Panc1 (cell line): ENCODE measurements at regions of chr10 and their contacts with region 1.

Region 1: GRCh38 chr10:79202188-79203013 is 133.6 kb downstream of the ZMIZ1 start:
- DNase-seq: no peak
- ATAC-seq: peak; percentile 79
- H3K4me3 ChIP-seq: no peak overlapping the region
- H3K27ac ChIP-seq: no peak overlapping the region
- H3K4me1 ChIP-seq: no peaks in the 10 kb centered on the region
- H3K27me3 ChIP-seq: no peaks in the 10 kb centered on the region
- CTCF ChIP-seq: peak; percentile 89; the same call in 1 of the 2 replicates

Region 2: DNA sequence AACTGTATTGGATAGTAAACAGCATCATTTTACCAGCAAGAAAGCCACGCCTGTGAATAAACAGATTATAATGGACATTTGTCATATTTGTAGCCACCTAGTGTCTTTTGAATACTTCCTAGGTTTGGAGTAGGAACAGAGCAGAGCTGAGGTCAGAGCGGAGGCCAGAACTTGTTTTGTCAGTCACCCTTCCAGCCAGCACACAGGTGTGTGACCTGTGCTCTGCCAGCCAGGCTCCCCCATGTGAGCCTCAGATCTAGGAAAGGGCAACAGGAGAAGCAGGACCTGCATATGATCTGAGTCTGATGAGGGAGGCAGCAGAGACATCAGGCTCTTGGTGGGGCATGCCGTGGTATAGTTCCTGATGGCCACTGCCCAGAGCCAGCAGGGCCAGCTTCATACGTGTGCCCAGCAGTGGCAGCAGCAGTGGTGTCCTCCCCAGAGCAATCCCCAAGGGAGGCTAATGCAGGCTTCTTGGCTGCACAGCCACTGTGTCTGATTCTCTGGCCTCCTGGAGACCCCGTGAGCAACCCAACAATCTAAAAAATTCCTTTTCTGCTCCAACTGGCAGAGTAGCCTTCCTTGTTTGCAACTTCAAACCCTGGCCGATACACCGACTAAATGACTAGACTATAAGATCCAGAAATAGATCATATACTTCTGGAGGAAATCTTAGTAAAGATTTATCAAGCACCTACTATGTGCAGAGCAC is 364.3 kb before region 1 on chr10:
- CTCF ChIA-PET with region 1: no interaction called
- POLR2A ChIA-PET with region 1: interaction called, 13 read pairs
- in situ Hi-C with region 1: no loop called
- intact Hi-C with region 1: no loop called
- DNase-seq: no peak
- ATAC-seq: no peak
- H3K4me3 ChIP-seq: no peak overlapping the region
- H3K27ac ChIP-seq: no peak overlapping the region
- H3K4me1 ChIP-seq: no peaks in the 10 kb centered on the region
- H3K27me3 ChIP-seq: peaks cover 12% of the 10 kb centered on the region; the same call in 1 of the 2 replicates
- CTCF ChIP-seq: no peak

Region 3: GRCh38 chr10:79105150-79105739 is 97.2 kb before region 1 on chr10:
- CTCF ChIA-PET with region 1: no interaction called
- POLR2A ChIA-PET with region 1: interaction called, 11 read pairs
- in situ Hi-C with region 1: no loop called
- intact Hi-C with region 1: no loop called
- DNase-seq: no peak
- ATAC-seq: no peak
- H3K4me3 ChIP-seq: no peak overlapping the region
- H3K27ac ChIP-seq: peak overlapping the region; percentile 14
- H3K4me1 ChIP-seq: peaks cover 59% of the 10 kb centered on the region
- H3K27me3 ChIP-seq: no peaks in the 10 kb centered on the region
- CTCF ChIP-seq: no peak

Region 4: GRCh38 chr10:79221110-79222051 is 19.0 kb after region 1 on chr10:
- CTCF ChIA-PET with region 1: no interaction called
- POLR2A ChIA-PET with region 1: no interaction called
- in situ Hi-C with region 1: no loop called
- intact Hi-C with region 1: no loop called
- DNase-seq: no peak
- ATAC-seq: no peak
- H3K4me3 ChIP-seq: no peak overlapping the region
- H3K27ac ChIP-seq: no peak overlapping the region
- H3K4me1 ChIP-seq: no peaks in the 10 kb centered on the region
- H3K27me3 ChIP-seq: no peaks in the 10 kb centered on the region
- CTCF ChIP-seq: no peak